ENCODE measurements at regions of chr4 and their contacts with region 1.

Region 1: DNA sequence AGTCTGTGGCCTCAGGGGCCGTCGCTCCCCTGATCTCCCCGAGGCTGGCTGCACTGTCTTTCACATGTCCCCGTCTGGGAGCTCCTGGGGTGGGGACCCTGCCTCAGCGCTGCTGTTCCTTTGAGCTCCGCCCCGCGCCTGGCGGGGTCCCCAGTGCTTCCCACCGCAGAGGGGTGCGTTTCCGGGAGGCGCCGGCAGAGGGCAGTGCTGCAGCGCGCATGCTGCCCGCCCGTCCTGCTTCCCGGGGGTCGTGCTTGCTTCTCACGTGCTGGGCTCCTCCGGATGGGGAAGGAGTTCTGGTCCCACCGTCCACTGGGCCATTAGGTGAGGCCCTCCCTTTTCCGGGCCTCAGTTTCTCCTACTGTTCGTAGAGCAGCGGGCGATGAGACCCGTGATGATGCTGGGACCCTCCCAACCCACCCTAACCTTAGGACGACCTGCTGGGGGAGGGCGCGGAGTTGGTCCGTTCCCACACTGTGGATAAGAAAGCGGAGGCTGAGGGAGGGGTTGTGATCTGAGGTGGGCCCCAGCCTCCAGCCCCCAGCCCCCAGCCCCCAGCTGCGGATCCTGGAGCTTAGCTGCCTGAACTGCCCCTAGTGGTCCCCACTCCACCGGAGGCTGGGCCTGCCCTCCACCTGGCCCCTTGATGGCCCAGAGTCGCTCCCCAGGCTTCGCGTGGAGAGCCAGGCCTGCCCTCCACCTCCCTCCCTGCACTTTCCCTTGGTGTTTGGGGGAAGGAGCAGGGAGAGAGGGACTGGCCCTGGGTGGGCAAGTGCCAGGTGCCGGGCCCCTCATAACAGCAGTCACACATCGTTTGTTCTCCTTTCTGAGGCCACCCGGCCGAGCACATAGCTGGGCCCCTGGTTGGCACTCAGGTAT is 15.3 kb downstream of the CPZ start:
- DNase-seq: peak; percentile 14
- H3K4me3 Mint-ChIP-seq: no peak overlapping the region
- H3K27ac Mint-ChIP-seq: no peak overlapping the region
- H3K4me1 Mint-ChIP-seq: no peaks in the 10 kb centered on the region
- H3K27me3 Mint-ChIP-seq: no peaks in the 10 kb centered on the region

Region 2: DNA sequence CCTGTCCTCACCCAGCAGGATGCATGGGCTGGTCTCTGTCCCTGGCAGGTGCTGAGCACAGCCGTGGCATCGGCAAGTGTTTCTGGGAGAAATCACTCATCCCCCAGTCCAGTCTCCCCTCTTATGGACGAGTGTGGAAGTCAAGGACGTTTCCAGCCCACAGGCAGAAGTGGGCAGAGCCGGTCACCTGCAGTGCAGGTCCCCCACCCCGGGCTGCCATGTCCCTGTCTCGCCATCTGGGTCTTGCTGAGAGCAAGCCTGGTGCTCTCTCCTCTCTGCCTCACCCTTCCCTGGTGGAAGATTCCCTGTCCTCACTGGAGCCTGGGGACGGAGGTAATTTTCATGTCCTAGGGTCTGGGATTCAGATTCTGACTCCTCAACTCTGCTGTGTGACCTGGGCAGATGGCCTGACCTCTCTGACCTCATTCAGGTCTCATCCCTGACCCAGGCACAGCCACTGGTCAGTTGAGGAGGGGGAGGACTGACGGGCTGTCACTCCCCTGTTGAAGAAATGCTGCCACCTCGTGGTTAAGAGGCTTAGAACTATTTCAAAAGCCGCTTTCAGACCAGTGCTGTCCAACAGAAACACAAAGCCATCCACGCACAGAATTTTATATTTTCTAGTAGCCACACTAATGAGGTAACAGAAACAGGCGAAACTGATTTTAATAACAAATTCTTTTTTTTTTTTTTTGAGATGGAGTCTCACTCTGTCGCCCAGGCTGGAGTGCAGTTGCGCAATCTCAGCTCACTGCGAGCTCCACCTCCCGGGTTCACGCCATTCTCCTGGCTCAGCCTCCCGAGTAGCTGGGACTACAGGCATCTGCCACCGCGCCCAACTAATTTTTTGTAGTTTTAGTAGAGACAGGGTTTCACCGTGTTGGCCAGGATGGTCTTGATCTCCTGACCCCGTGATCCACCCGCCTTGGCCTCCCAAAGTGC is 13.5 kb before region 1 on chr4:
- intact Hi-C with region 1: no loop called
- DNase-seq: no peak
- H3K4me3 Mint-ChIP-seq: no peak overlapping the region
- H3K27ac Mint-ChIP-seq: no peak overlapping the region
- H3K4me1 Mint-ChIP-seq: no peaks in the 10 kb centered on the region
- H3K27me3 Mint-ChIP-seq: peaks cover 17% of the 10 kb centered on the region

Region 3: GRCh38 chr4:8639777-8640720 is 32.2 kb after region 1 on chr4:
- intact Hi-C with region 1: no loop called
- DNase-seq: no peak
- H3K4me3 Mint-ChIP-seq: no peak overlapping the region
- H3K27ac Mint-ChIP-seq: no peak overlapping the region
- H3K4me1 Mint-ChIP-seq: no peaks in the 10 kb centered on the region
- H3K27me3 Mint-ChIP-seq: no peaks in the 10 kb centered on the region

Region 4: GRCh38 chr4:8819473-8820177 is 211.8 kb after region 1 on chr4:
- intact Hi-C with region 1: no loop called
- DNase-seq: peak; percentile 4
- H3K4me3 Mint-ChIP-seq: no peak overlapping the region
- H3K27ac Mint-ChIP-seq: no peak overlapping the region
- H3K4me1 Mint-ChIP-seq: no peaks in the 10 kb centered on the region
- H3K27me3 Mint-ChIP-seq: no peaks in the 10 kb centered on the region

Region 5: GRCh38 chr4:8917868-8918783 is 310.3 kb after region 1 on chr4:
- intact Hi-C with region 1: loop called (anchors 10 kb)
- DNase-seq: peak; percentile 46
- H3K4me3 Mint-ChIP-seq: no peak overlapping the region
- H3K27ac Mint-ChIP-seq: no peak overlapping the region
- H3K4me1 Mint-ChIP-seq: no peaks in the 10 kb centered on the region
- H3K27me3 Mint-ChIP-seq: no peaks in the 10 kb centered on the region

Measured in activated T-helper 2 cell treated with anti-CD3 and anti-CD28 coated beads, Interferon-gamma antibody, Interleukin-2, Interleukin-4, amounts not matched to agents 10 μg/mL and 5 μg/mL and 100 μg/mL, durations not matched to agents 14 hours and 24 hours and 36 hours (primary cell).